Dorsolateral prefrontal cortex (tissue), 120 donors: ENCODE measurements at regions of chr3 and their contacts with region 1.

Region 1: DNA sequence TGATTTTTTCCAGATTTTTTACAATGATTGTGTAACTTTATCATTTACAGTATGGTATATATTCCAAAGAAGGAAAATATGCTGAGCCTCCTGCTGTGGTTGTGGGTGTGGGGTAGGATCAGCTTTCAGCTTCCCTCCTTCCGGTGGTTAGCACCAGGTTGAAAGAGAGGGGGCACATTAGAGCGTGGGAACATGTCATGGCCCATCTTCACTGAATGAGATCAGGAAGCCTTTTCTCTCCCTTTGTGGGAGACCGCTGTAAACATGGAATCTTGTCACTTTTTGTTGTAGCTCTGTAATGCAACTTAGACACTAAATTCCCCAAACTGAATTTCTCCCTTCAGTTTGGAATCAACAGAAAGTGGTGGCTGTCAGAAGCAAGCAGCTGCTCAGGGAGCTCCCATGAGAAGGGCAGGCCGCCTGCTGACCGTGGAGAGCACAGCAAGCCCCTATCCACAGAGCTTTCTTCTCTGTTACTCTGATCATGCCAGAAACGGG is 86.7 kb upstream of the LIMD1 start:
- DNase-seq: peak in 1 of 10 donors; percentile 26
- H3K4me3 ChIP-seq: no peak overlapping the region
- H3K27ac ChIP-seq: peak overlapping the region in 44 of 59 donors; percentile 17 to 88 (median 68)
- H3K27me3 ChIP-seq: no peaks in the 10 kb centered on the region
- CTCF ChIP-seq: peak in 44 of 56 donors; percentile 13 to 61 (median 34)

Region 2: DNA sequence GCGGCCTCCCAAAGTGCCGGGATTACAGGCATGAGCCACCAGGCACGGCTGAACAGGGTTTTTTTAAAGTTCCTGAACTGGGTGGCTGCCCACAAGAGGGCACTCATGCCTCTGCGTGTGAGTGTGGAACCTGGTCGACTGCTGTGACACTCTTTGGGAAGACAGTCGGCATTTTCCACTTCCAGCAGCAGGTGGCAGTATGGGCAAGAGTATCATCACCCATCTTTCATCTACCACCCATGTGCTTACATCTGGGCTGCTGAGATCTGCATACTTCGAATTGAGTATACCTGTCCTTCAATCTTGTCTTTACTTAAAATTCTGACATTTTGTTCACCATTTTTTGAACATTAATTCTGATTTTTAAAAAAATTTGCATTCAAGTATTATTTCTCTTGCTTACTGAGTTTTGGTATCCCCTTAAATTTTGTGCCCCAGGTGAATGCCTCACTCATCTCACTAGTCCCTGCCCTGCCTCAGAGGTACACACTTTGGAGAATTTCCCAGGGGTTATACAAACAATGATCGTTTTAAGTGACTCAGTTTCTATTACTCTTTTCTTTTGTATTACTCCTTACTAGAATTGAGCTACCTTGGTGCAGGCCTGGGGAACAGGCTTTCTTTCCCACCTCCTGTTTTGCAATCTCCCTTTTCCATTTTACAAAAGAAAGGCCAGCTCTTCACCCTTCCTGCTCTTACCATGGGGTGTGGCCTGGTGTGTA is 470.0 kb before region 1 on chr3:
- intact Hi-C with region 1: loop called in 1 of 2 experiments (anchors 5 kb)
- DNase-seq: peak; percentile 83 to 98 (median 92)
- H3K4me3 ChIP-seq: peak overlapping the region in 30 of 59 donors; percentile 0 to 46 (median 22)
- H3K27ac ChIP-seq: no peak overlapping the region
- H3K27me3 ChIP-seq: no peaks in the 10 kb centered on the region
- CTCF ChIP-seq: peak; percentile 83 to 100 (median 96)

Region 3: DNA sequence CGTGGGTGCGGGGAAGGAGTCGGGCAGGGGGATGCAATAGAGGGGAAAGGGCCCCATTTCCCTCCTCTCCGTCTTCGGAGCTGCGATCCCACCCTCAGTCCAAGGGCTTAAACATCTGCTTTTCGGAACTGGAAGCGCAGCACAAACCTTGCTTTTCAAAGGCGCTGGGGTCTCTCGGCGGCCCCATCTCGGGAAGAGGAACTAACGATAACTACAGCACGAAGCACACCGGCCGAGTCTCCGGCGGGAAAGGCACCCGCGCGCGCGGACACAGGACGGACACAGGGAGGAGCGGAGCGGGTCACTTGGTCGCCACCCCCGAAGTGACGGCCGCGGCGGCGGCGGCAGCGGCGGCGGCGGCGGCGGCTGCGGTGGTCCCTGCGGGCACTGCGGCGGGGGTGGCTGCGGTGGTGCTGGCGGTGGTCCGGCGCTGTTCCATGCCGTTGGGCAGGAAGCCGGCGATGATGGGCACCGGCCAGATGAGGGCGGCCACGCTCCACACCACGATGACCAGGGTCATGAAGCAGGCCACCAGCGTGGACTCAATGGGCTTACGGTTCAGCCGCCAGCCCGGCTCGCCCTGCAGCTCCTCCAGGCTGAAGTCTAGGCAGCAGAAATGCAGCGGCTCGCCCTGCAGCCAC is 282.9 kb before region 1 on chr3:
- intact Hi-C with region 1: loop called in 1 of 2 experiments (anchors 2 kb)
- DNase-seq: peak; percentile 71 to 83 (median 78)
- H3K4me3 ChIP-seq: peak overlapping the region; percentile 34 to 75 (median 60)
- H3K27ac ChIP-seq: peak overlapping the region in 9 of 59 donors; percentile 11 to 48 (median 33)
- H3K27me3 ChIP-seq: peaks cover 0 to 31% (median 0%) of the 10 kb centered on the region in 45 donors
- CTCF ChIP-seq: peak in 53 of 56 donors; percentile 22 to 79 (median 60)

Region 4: GRCh38 chr3:45546716-45547701 is 39.1 kb after region 1 on chr3:
- intact Hi-C with region 1: loop called (anchors 2 kb)
- DNase-seq: peak in 1 of 10 donors; percentile 52
- H3K4me3 ChIP-seq: no peak overlapping the region
- H3K27ac ChIP-seq: peak overlapping the region in 56 of 59 donors; percentile 42 to 98 (median 93)
- H3K27me3 ChIP-seq: no peaks in the 10 kb centered on the region
- CTCF ChIP-seq: peak in 48 of 56 donors; percentile 5 to 64 (median 42)

Region 5: GRCh38 chr3:45583021-45583851 is 75.4 kb after region 1 on chr3:
- intact Hi-C with region 1: loop called (anchors 2 to 5 kb)
- DNase-seq: peak; percentile 77 to 93 (median 88)
- H3K4me3 ChIP-seq: no peak overlapping the region
- H3K27ac ChIP-seq: peak overlapping the region in 58 of 59 donors; percentile 34 to 93 (median 82)
- H3K27me3 ChIP-seq: peaks cover 0 to 6% (median 0%) of the 10 kb centered on the region in 45 donors
- CTCF ChIP-seq: peak in 10 of 56 donors; percentile 4 to 26 (median 12)

Region 6: DNA sequence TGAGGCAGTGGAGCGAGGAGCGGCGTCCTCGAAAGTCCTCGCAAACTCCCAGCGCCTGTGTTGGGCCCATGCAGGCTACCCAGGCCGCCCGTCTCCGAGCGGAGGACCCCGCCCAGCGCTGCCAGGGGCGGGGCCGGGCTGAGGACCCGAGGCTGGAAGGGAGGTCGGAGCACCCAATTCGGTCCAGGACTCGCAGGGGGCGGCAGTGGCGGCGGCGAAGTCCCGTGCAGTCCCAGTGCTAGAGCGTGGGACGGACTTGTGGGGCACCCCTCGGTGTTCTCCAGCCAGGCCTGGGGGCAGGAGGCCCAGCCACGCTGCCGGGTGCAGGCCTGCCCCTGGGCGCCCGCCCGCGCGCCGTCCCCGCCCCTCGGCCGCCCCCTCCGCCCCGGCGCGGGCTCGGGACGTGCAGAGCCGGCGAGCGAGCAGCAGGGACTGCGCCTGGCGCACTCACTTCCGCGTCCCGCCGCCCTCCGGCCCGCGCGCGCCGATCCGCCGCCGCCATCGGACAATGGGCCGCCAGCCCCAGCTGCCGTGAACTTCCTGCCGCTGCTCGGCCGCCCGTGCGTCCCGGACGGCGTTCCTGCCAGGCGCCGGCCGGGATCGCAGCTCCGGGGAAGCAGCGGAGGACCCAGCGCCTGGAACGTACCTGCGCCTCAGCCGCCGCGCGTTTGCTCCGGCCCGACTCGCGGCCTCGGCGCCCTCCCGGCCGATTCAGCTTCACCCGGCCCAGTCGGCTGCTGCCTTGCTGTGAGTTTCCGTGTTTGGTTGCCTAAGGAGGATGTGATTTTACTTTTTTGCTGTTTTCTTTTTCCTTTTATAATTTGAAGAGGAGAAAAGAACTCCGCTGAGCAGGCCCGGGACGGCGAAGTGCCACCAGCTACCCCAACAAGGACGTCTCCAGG is 86.1 kb after region 1 on chr3:
- intact Hi-C with region 1: loop called in 1 of 2 experiments (anchors 2 kb)
- DNase-seq: peak in 4 of 10 donors; percentile 31 to 69 (median 48)
- H3K4me3 ChIP-seq: peak overlapping the region; percentile 40 to 81 (median 69)
- H3K27ac ChIP-seq: peak overlapping the region in 47 of 59 donors; percentile 6 to 85 (median 62)
- H3K27me3 ChIP-seq: no peaks in the 10 kb centered on the region
- CTCF ChIP-seq: peak in 8 of 56 donors; percentile 7 to 31 (median 12)

Region 7: GRCh38 chr3:45656575-45657363 is 148.9 kb after region 1 on chr3:
- intact Hi-C with region 1: loop called (anchors 1 to 2 kb)
- DNase-seq: peak; percentile 79 to 94 (median 89)
- H3K4me3 ChIP-seq: no peak overlapping the region
- H3K27ac ChIP-seq: no peak overlapping the region
- H3K27me3 ChIP-seq: no peaks in the 10 kb centered on the region
- CTCF ChIP-seq: peak; percentile 89 to 98 (median 95)

Region 8: GRCh38 chr3:45864760-45865519 is 357.1 kb after region 1 on chr3:
- intact Hi-C with region 1: no loop called
- DNase-seq: no peak
- H3K4me3 ChIP-seq: no peak overlapping the region
- H3K27ac ChIP-seq: peak overlapping the region in 26 of 59 donors; percentile 2 to 69 (median 31)
- H3K27me3 ChIP-seq: no peaks in the 10 kb centered on the region
- CTCF ChIP-seq: no peak